Endothelial cell of umbilical vein (primary cell): ENCODE measurements at regions of chr2 and their contacts with region 1.

Region 1: DNA sequence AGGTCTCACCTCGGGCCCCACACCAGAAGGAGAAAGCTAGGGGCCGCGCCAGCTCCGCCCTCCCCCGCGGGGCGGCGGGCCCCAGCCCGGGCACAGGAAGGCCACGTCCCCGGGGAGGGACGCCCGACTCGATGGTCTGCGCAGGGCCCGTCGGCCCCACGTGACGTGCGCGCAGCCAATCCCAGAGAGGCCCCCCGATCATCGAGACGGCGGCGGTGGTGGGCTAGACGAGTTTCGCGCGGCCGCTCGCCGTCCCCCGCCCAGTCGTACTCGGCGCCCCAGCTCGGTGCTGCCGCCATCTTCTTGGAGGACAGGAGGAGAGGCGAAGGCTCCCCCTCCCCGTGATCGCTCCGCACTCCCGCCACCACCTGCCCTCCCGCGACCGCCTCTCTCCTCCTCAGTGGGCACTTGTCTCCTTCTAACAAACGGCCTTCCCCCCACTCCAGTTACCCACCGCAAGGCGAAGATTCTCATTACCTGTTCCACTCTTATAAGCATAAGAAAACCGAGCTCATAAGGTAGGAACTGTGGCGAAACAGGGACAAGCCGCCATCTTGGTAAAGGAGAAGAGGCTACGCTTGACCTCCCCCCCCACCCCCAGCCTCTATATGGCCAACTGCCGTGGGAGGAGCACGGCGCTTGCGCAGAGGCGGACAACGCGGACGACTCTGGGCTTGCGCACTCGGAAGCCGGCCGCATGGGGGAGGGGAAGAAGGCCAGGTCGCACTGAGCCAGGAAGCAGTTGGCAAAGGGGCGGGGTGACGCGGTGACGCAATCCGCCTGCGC is at the start of gene HDLBP:
- DNase-seq: peak; percentile 99
- H3K4me3 ChIP-seq: peak within 1 kb of the TSS; percentile 67 to 93 (median 92)
- H3K27ac ChIP-seq: peak within 1 kb of the TSS; percentile 90
- H3K4me1 ChIP-seq: peaks cover 36% of the 10 kb centered on the region
- H3K27me3 ChIP-seq: no peaks in the 10 kb centered on the region
- CTCF ChIP-seq: peak; percentile 14 to 33
- POLR2A ChIP-seq: peak; percentile 89
- total RNA-seq, gene HDLBP: 554 and 569 TPM in 2 replicates

Region 2: DNA sequence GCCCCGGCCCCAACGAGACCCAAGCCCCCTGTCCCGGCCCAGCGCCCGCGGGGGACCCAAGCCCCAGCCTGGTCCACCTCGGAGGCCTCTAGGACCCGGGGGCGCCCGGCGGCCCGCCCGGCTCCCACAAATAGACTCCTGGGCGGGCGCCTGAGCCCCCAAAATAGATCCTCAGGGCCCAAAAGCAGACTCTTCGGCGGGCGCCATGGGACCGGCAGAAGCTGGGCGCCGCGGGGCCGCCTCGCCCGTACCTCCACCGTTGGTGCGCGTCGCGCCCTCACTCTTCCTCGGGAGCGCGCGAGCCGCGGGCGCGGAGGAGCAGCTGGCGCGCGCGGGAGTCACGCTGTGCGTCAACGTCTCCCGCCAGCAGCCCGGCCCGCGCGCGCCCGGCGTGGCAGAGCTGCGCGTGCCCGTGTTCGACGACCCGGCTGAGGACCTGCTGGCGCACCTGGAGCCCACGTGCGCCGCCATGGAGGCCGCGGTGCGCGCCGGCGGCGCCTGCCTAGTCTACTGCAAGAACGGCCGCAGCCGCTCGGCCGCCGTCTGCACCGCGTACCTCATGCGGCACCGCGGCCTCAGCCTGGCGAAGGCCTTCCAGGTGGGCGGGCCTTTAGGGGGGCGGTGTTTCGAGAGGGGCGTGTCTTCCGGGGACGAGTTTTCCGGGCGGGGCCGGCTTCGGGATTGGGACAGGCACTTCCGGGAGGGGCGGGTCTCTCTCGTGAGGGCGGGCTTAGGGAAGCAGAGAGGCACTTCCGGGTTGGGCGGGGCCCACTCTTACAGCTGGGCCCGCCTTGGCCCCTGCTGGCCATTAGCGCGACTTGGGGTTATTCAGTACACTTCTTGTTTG is 754.6 kb before region 1 on chr2:
- CTCF ChIA-PET with region 1: no interaction called
- POLR2A ChIA-PET with region 1: no interaction called
- dilution Hi-C with region 1: no loop called
- intact Hi-C with region 1: loop called (anchors 5 kb)
- DNase-seq: peak; percentile 98
- H3K4me3 ChIP-seq: peak overlapping the region; percentile 42 to 66 (median 61)
- H3K27ac ChIP-seq: peak overlapping the region; percentile 77
- H3K4me1 ChIP-seq: peaks cover 40% of the 10 kb centered on the region
- H3K27me3 ChIP-seq: no peaks in the 10 kb centered on the region
- CTCF ChIP-seq: peak; percentile 12 to 48
- POLR2A ChIP-seq: peak; percentile 92

Region 3: DNA sequence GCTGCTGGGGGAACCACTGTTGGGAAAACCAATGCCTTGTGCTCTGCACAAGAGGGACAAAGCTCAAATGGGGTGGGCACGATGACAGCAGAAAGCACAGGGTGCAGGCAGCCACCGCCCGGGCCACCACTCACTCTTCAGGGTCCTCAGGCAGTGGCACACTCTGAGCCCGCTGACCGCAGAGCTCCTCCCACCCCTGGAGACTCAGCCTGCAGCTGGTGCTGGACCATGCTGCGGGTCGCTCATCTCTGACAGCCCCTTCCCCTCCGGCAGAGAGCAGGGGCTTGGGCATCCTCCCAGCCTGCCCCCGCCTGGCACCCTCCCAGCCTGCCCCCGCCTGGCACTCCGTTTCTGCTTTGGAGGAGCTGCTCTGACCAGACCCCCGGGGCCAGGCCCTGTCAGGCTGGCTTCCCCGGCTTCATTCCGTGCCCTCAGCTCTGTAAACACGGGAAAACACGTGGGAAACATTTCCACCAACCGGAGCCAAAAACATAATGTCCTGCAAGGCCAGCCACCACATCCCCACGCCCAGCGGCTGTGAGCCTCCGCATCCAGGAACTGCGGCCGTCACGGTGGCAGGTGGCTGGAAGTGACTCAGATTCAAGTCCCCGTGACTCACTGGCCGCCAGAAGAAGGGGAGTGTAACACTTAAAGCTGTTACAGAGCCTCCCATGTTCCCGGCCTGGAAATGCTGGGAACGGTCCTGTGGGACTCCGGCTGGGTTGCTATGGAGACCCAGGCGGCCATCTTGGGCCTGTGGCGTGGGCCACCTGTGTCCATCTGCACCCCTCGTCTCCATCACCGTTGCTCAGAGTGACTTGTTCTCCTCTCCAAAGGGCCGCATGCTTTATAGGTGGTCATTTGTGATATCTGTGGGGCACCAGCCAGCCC is 323.7 kb before region 1 on chr2:
- CTCF ChIA-PET with region 1: no interaction called
- POLR2A ChIA-PET with region 1: interaction called, 3 read pairs
- dilution Hi-C with region 1: no loop called
- intact Hi-C with region 1: loop called (anchors 2 kb)
- DNase-seq: peak; percentile 98
- H3K4me3 ChIP-seq: no peak overlapping the region
- H3K27ac ChIP-seq: peak overlapping the region; percentile 73
- H3K4me1 ChIP-seq: peaks cover 28% of the 10 kb centered on the region
- H3K27me3 ChIP-seq: no peaks in the 10 kb centered on the region
- CTCF ChIP-seq: no peak
- POLR2A ChIP-seq: no peak

Region 4: DNA sequence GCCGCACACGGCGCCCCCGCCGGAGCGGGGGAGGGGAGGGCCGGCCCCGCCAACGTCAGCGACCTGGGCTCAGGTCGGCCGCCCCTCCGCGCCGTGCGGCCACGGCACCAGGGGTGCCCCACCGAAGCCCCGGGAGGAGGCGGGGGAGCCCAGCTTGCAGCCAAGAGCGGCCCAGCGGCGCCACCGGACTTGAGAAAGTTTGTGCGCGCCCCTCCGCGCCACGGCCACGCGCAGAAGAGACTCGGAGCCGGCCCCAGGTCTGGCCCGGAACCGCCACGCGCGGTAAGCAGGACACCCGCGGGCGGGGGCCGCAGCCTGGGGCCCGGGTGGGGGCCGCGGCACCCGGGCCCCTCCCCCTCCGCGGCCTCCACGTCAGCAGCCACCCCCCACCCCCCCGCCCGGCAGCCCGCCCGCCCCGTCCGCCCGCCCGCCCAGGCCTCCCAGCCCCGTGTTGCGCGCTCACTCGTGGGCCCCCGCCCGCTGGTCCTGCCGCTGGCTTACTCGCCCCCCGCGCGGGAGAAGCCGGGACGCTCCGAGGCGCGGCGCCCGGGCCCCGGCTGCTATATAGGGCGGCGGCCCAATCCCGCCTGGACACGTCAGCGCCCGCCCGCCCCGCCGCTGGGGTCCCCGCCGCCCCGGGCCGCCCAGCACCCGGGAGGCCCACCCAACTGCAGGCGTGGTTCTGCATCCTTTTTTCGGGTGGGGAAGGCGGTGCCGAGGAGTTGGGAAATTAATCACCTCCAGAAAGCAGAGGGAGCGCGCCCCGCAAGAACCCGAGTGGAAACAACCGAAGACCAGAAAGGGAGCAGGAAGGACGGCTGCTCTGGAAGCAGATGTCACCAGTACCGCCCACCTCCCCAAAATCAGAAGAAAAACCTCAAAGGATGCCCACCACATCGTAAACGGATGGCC is 42.7 kb before region 1 on chr2:
- CTCF ChIA-PET with region 1: interaction called, 4 read pairs
- POLR2A ChIA-PET with region 1: no interaction called
- dilution Hi-C with region 1: no loop called
- intact Hi-C with region 1: loop called (anchors 1 kb)
- DNase-seq: peak; percentile 58
- H3K4me3 ChIP-seq: peak overlapping the region; percentile 75 to 92 (median 88)
- H3K27ac ChIP-seq: peak overlapping the region; percentile 66
- H3K4me1 ChIP-seq: peaks cover 27% of the 10 kb centered on the region
- H3K27me3 ChIP-seq: no peaks in the 10 kb centered on the region
- CTCF ChIP-seq: no peak
- POLR2A ChIP-seq: peak; percentile 27

Region 5: GRCh38 chr2:241286348-241287090 is 28.8 kb before region 1 on chr2:
- CTCF ChIA-PET with region 1: no interaction called
- POLR2A ChIA-PET with region 1: no interaction called
- dilution Hi-C with region 1: no loop called
- intact Hi-C with region 1: no loop called
- DNase-seq: no peak
- H3K4me3 ChIP-seq: no peak overlapping the region
- H3K27ac ChIP-seq: no peak overlapping the region
- H3K4me1 ChIP-seq: no peaks in the 10 kb centered on the region
- H3K27me3 ChIP-seq: no peaks in the 10 kb centered on the region
- CTCF ChIP-seq: no peak
- POLR2A ChIP-seq: no peak

Region 6: GRCh38 chr2:241702132-241703031 is 387.1 kb after region 1 on chr2:
- CTCF ChIA-PET with region 1: no interaction called
- POLR2A ChIA-PET with region 1: no interaction called
- dilution Hi-C with region 1: no loop called
- intact Hi-C with region 1: loop called (anchors 5 kb)
- DNase-seq: peak; percentile 82
- H3K4me3 ChIP-seq: peak overlapping the region; percentile 49 to 75 (median 64)
- H3K27ac ChIP-seq: peak overlapping the region; percentile 15
- H3K4me1 ChIP-seq: peaks cover 6% of the 10 kb centered on the region
- H3K27me3 ChIP-seq: no peaks in the 10 kb centered on the region
- CTCF ChIP-seq: peak; percentile 45 to 56
- POLR2A ChIP-seq: no peak

Region 7: GRCh38 chr2:241865957-241866789 is 550.9 kb after region 1 on chr2:
- CTCF ChIA-PET with region 1: no interaction called
- POLR2A ChIA-PET with region 1: no interaction called
- dilution Hi-C with region 1: no loop called
- intact Hi-C with region 1: no loop called
- DNase-seq: peak; percentile 17
- H3K4me3 ChIP-seq: no peak overlapping the region
- H3K27ac ChIP-seq: no peak overlapping the region
- H3K4me1 ChIP-seq: no peaks in the 10 kb centered on the region
- H3K27me3 ChIP-seq: peaks cover 0 to 6% of the 10 kb centered on the region in 2 experiments
- CTCF ChIP-seq: no peak
- POLR2A ChIP-seq: no peak